ENCODE measurements at regions of chr12 and their contacts with region 1.

Region 1: GRCh38 chr12:153080-153746 is 60.7 kb downstream of the SLC6A12 start:
- DNase-seq: peak; percentile 87
- ATAC-seq: peak; percentile 95
- H3K4me3 Mint-ChIP-seq: peak overlapping the region; percentile 45
- H3K27ac Mint-ChIP-seq: no peak overlapping the region
- H3K4me1 Mint-ChIP-seq: peaks cover 31% of the 10 kb centered on the region
- H3K27me3 Mint-ChIP-seq: no peaks in the 10 kb centered on the region; the same call in 1 of the 2 replicates
- CTCF ChIP-seq: peak; percentile 69

Region 2: DNA sequence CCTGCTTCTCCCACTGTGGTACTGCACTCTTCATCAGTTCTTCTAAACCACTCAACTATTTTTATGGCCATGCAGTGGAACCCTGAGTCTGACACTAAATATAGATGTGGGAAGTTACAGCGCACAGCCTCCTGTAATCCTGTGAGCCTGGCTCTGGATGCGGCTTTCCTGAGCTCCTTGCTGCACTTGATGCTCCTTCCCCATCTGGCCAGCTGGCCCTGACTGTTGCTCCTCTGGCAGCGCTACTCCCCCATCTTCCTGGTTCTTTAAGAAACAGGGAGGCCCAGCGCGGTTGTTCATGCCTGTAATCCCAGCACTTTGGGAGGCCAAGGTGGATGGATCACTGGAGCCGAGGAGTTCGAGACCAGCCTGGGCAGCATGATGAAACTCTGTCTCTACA is 62.0 kb before region 1 on chr12:
- CTCF ChIA-PET with region 1: no interaction called
- POLR2A ChIA-PET with region 1: no interaction called
- DNase-seq: no peak
- ATAC-seq: no peak
- H3K4me3 Mint-ChIP-seq: no peak overlapping the region
- H3K27ac Mint-ChIP-seq: no peak overlapping the region
- H3K4me1 Mint-ChIP-seq: no peaks in the 10 kb centered on the region
- H3K27me3 Mint-ChIP-seq: no peaks in the 10 kb centered on the region
- CTCF ChIP-seq: no peak

Region 3: DNA sequence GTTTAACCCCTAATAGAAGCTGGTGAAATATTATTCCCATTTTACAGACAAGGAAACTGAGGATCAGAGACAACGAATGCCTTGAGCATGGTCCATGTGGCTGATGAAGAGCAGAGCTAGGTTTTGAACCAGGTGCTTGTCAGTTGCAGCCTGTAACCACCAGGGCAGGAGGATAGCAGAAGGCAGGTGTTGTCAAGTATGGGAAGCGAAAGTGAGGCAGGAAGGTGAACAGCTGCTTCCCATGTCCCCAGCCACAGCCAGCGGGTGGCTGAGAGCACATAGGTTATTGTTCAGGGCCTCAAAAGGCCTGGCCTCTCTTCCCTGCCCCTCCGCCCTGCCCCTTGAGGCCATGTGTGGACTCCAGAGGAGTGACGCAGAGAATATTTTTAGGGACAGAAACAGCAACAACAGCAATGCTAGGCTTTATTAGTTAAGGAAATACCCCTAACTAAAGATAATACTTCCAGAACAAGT is 47.1 kb before region 1 on chr12:
- CTCF ChIA-PET with region 1: interaction called, 10 read pairs
- POLR2A ChIA-PET with region 1: no interaction called
- DNase-seq: peak; percentile 46
- ATAC-seq: peak; percentile 57
- H3K4me3 Mint-ChIP-seq: no peak overlapping the region
- H3K27ac Mint-ChIP-seq: peak overlapping the region; percentile 8; the same call in 1 of the 2 replicates
- H3K4me1 Mint-ChIP-seq: peaks cover 58% of the 10 kb centered on the region
- H3K27me3 Mint-ChIP-seq: peaks cover 3% of the 10 kb centered on the region; the same call in 1 of the 2 replicates
- CTCF ChIP-seq: no peak

Region 4: DNA sequence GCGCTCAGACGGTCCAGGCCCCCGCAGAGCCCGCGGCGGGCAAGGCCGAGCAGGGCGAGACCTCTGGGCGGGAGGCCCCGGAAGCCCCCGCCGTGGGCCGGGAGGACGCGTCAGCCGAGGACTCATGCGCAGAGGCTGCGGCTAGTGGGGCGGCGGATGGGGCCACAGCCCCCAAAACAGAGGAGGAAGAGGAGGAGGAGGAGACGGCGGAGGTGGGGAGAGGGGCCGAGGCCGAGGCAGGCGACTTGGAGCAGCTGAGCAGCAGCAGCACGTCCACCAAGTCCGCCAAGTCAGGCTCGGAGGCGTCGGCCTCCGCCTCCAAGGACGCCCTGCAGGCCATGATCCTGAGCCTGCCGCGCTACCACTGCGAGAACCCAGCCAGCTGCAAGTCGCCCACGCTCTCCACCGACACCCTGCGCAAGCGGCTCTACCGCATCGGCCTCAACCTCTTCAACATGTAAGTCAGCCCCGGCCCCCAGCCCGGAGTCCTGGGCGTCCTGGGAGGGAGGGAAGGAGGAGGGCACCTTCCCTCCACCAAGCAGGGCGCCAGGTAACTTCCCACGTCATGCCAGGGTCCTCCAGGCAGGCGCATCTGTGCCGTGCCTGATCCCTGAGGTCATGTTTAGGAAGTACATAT is 14.2 kb before region 1 on chr12:
- CTCF ChIA-PET with region 1: interaction called, 44 read pairs
- POLR2A ChIA-PET with region 1: interaction called, 3 read pairs
- DNase-seq: peak; percentile 49
- ATAC-seq: peak; percentile 46
- H3K4me3 Mint-ChIP-seq: peak overlapping the region; percentile 50
- H3K27ac Mint-ChIP-seq: no peak overlapping the region
- H3K4me1 Mint-ChIP-seq: peaks cover 45% of the 10 kb centered on the region
- H3K27me3 Mint-ChIP-seq: peaks cover 43% of the 10 kb centered on the region
- CTCF ChIP-seq: no peak

Region 5: GRCh38 chr12:169528-170370 is 16.5 kb after region 1 on chr12:
- CTCF ChIA-PET with region 1: interaction called, 16 read pairs
- POLR2A ChIA-PET with region 1: no interaction called
- DNase-seq: no peak
- ATAC-seq: peak; percentile 38
- H3K4me3 Mint-ChIP-seq: no peak overlapping the region
- H3K27ac Mint-ChIP-seq: no peak overlapping the region
- H3K4me1 Mint-ChIP-seq: peaks cover 52% of the 10 kb centered on the region
- H3K27me3 Mint-ChIP-seq: peaks cover 8% of the 10 kb centered on the region
- CTCF ChIP-seq: no peak

Region 6: GRCh38 chr12:203462-204260 is 50.4 kb after region 1 on chr12:
- CTCF ChIA-PET with region 1: interaction called, 19 read pairs
- POLR2A ChIA-PET with region 1: no interaction called
- DNase-seq: peak; percentile 59
- ATAC-seq: peak; percentile 58
- H3K4me3 Mint-ChIP-seq: peak overlapping the region; percentile 68
- H3K27ac Mint-ChIP-seq: no peak overlapping the region
- H3K4me1 Mint-ChIP-seq: peaks cover 24% of the 10 kb centered on the region
- H3K27me3 Mint-ChIP-seq: peaks cover 58% of the 10 kb centered on the region
- CTCF ChIP-seq: no peak

Region 7: GRCh38 chr12:252636-253035 is 99.4 kb after region 1 on chr12:
- CTCF ChIA-PET with region 1: no interaction called
- POLR2A ChIA-PET with region 1: no interaction called
- DNase-seq: no peak
- ATAC-seq: no peak
- H3K4me3 Mint-ChIP-seq: no peak overlapping the region
- H3K27ac Mint-ChIP-seq: no peak overlapping the region
- H3K4me1 Mint-ChIP-seq: peaks cover 9% of the 10 kb centered on the region
- H3K27me3 Mint-ChIP-seq: peaks cover 3% of the 10 kb centered on the region; the same call in 1 of the 2 replicates
- CTCF ChIP-seq: no peak

Region 8: GRCh38 chr12:304805-305204 is 151.6 kb after region 1 on chr12:
- CTCF ChIA-PET with region 1: no interaction called
- POLR2A ChIA-PET with region 1: no interaction called
- DNase-seq: no peak
- ATAC-seq: no peak
- H3K4me3 Mint-ChIP-seq: no peak overlapping the region
- H3K27ac Mint-ChIP-seq: no peak overlapping the region
- H3K4me1 Mint-ChIP-seq: no peaks in the 10 kb centered on the region
- H3K27me3 Mint-ChIP-seq: no peaks in the 10 kb centered on the region
- CTCF ChIP-seq: no peak

Region 9: DNA sequence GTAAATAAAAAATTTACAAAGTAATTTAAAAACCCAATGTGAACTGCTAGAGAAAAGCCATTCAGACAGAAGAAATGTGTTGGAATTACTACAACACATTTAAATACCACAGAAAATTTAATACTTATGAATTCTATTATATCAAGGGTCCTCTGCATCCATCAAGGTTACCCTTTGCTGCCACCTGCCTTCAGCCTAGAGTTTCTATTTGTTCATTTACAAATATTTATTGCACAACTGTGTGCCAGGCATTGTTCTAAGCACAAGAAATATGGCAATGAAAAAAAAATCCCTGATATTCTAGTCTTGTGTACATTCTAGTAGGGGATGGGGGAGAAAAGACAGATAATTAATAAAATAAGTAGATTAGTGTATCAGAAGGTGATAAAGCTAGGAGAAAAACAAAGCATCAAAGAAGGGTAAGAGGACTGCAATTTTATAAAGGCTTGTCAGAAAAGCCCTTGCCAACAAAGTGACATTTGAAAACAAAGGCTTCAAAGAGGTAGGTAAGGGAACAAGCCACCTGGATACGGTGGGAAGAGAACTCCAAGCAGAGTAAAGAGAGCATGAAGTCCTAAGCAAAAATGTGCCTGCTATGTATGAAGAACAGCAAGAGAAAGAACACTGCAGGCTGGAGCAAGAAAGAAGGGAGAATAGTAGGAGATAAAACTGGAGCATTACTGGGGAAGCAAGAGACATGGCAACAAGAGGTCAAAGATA is 168.6 kb after region 1 on chr12:
- CTCF ChIA-PET with region 1: no interaction called
- POLR2A ChIA-PET with region 1: no interaction called
- DNase-seq: no peak
- ATAC-seq: no peak
- H3K4me3 Mint-ChIP-seq: no peak overlapping the region
- H3K27ac Mint-ChIP-seq: no peak overlapping the region
- H3K4me1 Mint-ChIP-seq: no peaks in the 10 kb centered on the region
- H3K27me3 Mint-ChIP-seq: no peaks in the 10 kb centered on the region
- CTCF ChIP-seq: no peak

Measured in WTC11 (cell line).